ENCODE measurements at regions of chr2 and their contacts with region 1.

Region 1: GRCh38 chr2:175181104-175181876 is at the start of gene ATP5MC3:
- DNase-seq: peak; percentile 95
- H3K4me3 Mint-ChIP-seq: peak within 1 kb of the TSS; percentile 94
- H3K27ac Mint-ChIP-seq: peak within 1 kb of the TSS; percentile 85
- H3K4me1 Mint-ChIP-seq: peaks cover 29% of the 10 kb centered on the region
- H3K27me3 Mint-ChIP-seq: no peaks in the 10 kb centered on the region
- total RNA-seq, gene ATP5MC3: 308 to 310 TPM

Region 2: GRCh38 chr2:174248187-174248997 is 932.9 kb before region 1 on chr2 and contains the start of gene OLA1:
- CTCF ChIA-PET with region 1: no interaction called
- intact Hi-C with region 1: loop called (anchors 1 kb)
- DNase-seq: peak; percentile 97
- H3K4me3 Mint-ChIP-seq: peak within 1 kb of the TSS; percentile 84
- H3K27ac Mint-ChIP-seq: peak within 1 kb of the TSS; percentile 79
- H3K4me1 Mint-ChIP-seq: peaks cover 25% of the 10 kb centered on the region
- H3K27me3 Mint-ChIP-seq: no peaks in the 10 kb centered on the region
- total RNA-seq, gene OLA1: 140 to 142 TPM

Region 3: GRCh38 chr2:175010848-175011254 is 170.4 kb before region 1 on chr2:
- CTCF ChIA-PET with region 1: no interaction called
- intact Hi-C with region 1: no loop called
- DNase-seq: no peak
- H3K4me3 Mint-ChIP-seq: no peak overlapping the region
- H3K27ac Mint-ChIP-seq: no peak overlapping the region
- H3K4me1 Mint-ChIP-seq: peaks cover 3% of the 10 kb centered on the region
- H3K27me3 Mint-ChIP-seq: peaks cover 22% of the 10 kb centered on the region

Region 4: GRCh38 chr2:175154661-175155082 is 26.6 kb before region 1 on chr2:
- CTCF ChIA-PET with region 1: no interaction called
- intact Hi-C with region 1: loop called (anchors 2 kb)
- DNase-seq: peak; percentile 8
- H3K4me3 Mint-ChIP-seq: no peak overlapping the region
- H3K27ac Mint-ChIP-seq: no peak overlapping the region
- H3K4me1 Mint-ChIP-seq: peaks cover 40% of the 10 kb centered on the region
- H3K27me3 Mint-ChIP-seq: no peaks in the 10 kb centered on the region

Measured in activated naive CD4-positive, alpha-beta T cell treated with anti-CD3 and anti-CD28 coated beads for 36 hours (primary cell).